Sigmoid colon (tissue), 7 donors: ENCODE measurements at regions of chr9 and their contacts with region 1.

Region 1: DNA sequence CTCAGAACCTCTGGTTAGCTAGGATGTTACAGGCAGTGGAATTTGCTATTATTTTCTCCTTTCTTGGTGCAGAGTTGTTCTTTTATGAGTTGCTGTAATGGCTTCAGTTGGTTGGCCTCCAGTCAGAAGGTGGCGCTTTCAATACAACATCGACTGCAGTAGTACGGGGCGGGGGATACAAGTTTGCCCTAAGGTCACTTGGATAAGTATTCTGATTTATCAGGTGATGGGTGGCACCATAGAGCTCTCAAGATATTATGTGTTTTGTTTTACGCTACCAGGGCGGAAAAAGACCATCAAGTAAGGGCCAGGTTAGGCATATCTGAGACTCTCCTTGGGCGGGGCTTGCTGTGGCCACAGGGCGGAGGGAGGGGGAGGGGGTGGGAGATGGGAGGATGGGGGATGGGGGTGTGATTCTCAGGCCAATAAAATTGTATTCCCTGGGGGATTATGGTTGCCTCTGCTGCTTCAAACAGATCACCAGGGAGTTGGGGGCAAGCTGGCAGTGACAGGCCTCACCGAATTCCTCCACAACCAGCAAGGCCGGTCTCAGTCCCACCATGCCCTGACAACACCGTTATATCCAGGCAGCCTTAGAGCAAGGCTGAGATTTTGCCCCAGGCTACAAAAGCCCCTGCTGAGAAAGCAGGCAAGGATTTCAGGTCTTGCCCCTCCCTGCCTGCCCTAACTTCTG is 15.9 kb upstream of the RNF38 start:
- DNase-seq: no peak
- H3K4me3 ChIP-seq: no peak overlapping the region
- H3K27ac ChIP-seq: no peak overlapping the region
- H3K4me1 ChIP-seq: peaks cover 0 to 7% (median 7%) of the 10 kb centered on the region in 4 donors
- H3K27me3 ChIP-seq: no peaks in the 10 kb centered on the region
- CTCF ChIP-seq: no peak
- EP300 ChIP-seq: no peak
- POLR2A ChIP-seq: no peak

Region 2: GRCh38 chr9:36245906-36246305 is 170.1 kb before region 1 on chr9:
- intact Hi-C with region 1: no loop called
- DNase-seq: no peak
- H3K4me3 ChIP-seq: no peak overlapping the region
- H3K27ac ChIP-seq: no peak overlapping the region
- H3K4me1 ChIP-seq: peaks cover 0 to 19% (median 11%) of the 10 kb centered on the region in 4 donors
- H3K27me3 ChIP-seq: no peaks in the 10 kb centered on the region
- CTCF ChIP-seq: no peak
- EP300 ChIP-seq: no peak
- POLR2A ChIP-seq: no peak

Region 3: DNA sequence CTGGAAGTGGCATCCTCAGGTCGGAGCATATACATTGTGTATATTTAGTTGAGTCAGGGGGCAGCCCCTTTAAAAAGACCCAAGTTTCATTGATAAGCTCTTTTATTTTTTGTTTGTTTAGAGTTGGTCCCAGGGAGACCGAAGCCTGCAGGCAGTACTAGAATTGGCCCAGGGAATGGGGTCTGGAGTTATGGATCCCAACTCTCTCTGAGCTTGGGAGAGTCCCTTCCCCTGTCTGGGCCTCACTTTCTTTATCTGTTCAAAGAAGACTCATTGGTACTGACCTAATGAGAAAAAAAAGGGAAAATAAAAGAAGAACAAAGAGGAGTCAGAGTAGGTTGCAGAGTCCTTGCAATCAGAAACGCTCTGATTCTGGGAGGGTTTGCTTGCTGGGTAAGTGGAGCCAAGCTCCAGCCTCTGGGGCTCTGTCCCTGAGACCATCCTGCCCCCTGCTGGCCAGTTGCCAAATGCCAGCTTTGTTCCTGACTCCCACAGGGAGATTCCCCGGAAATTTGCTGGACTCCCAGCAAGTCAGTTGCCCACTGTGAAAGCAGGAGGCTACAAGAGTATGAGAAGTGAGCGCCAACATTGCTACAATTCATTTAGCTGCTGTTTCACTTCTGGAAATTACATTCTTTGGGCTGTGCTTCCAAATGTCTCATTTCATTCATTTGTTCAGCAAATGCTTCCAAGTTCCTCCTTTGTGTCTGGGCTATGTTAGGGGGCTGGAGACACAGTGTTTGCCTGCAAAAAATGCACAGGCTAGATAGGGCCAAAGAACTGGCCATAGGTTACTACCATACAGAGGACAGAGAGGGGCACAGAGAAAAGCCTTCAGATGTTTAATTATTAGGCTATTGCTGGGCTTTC is 312.9 kb after region 1 on chr9:
- intact Hi-C with region 1: loop called (anchors 10 kb)
- DNase-seq: no peak
- H3K4me3 ChIP-seq: no peak overlapping the region
- H3K27ac ChIP-seq: no peak overlapping the region
- H3K4me1 ChIP-seq: no peaks in the 10 kb centered on the region
- H3K27me3 ChIP-seq: no peaks in the 10 kb centered on the region
- CTCF ChIP-seq: no peak
- EP300 ChIP-seq: no peak
- POLR2A ChIP-seq: no peak